Esophagus muscularis mucosa (tissue), 4 donors: ENCODE measurements at regions of chr5 and their contacts with region 1.

Region 1: DNA sequence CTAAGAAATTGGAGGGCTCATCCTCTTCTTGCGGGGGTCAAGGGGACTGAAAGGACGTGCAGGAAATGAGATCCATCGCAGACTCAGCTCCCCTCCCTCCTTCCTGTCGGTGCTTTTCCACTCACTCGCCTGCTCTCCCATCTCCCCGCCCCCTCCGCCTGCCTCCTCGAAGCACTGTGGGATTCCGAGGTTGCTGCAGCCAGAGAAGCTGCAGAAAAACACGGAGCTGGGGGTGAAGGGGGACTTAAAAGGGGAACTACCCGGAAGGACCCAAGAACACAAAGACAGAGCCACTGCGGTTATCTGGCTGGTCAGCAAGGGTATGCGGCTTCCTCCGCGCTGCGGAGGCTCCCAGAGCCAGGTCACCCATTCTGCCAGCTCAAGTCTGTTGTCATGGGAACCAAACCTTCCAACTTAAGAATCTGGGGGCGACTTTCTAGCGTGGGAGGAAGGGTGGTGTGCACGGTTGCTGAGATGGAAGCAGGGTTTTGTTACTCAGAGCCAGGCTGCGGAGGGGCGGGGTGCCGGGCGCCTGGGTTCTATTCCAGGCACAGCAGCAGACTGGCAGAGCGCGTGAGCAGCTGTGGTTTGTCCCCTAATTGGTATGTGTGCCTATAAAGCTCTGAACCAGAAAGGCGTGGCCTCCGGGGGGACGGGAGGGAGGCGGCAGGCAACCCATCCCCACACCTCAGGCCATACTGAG is 24.9 kb downstream of the PCDHGC5 start:
- DNase-seq: no peak
- H3K4me3 ChIP-seq: peak overlapping the region; percentile 65 to 71 (median 66)
- H3K27ac ChIP-seq: peak overlapping the region; percentile 91 to 97 (median 94)
- H3K4me1 ChIP-seq: peaks cover 55 to 73% (median 61%) of the 10 kb centered on the region in 4 donors
- H3K27me3 ChIP-seq: no peaks in the 10 kb centered on the region
- CTCF ChIP-seq: no peak
- EP300 ChIP-seq: no peak
- POLR2A ChIP-seq: no peak

Region 2: DNA sequence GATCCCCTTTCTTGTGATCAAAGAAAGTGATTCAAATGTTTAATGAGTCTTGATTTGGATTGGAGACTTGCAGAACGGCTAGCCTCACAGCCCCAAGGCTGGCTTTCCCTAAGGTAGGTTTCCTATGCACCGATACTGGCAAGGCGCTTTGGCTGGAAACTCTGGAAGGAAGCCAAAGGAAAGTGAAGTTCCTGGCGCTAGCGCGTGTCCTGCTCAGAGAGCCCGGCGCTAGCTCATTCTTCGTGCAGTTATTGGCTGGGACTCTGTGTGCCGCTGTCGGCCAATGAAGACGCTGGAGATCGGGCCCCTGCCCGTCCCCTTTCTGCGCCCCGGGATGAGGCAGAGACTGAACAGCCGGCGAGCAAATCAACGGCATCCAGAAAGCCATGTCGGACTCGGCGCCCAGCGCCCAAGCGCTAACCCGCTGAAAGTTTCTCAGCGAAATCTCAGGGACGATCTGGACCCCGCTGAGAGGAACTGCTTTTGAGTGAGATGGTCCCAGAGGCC is 38.1 kb before region 1 on chr5 and contains the start of gene PCDHGC3:
- intact Hi-C with region 1: loop called (anchors 2 kb)
- DNase-seq: peak; percentile 97
- H3K4me3 ChIP-seq: peak within 1 kb of the TSS; percentile 64 to 75 (median 68)
- H3K27ac ChIP-seq: peak within 1 kb of the TSS; percentile 84 to 93 (median 89)
- H3K4me1 ChIP-seq: peaks cover 39 to 49% (median 48%) of the 10 kb centered on the region in 4 donors
- H3K27me3 ChIP-seq: no peaks in the 10 kb centered on the region
- CTCF ChIP-seq: peak; percentile 40 to 64 (median 58)
- EP300 ChIP-seq: no peak
- POLR2A ChIP-seq: no peak
- total RNA-seq, gene PCDHGC3: 56.5 to 81.1 (median 65.5) TPM

Region 3: GRCh38 chr5:142053426-142054151 is 539.8 kb after region 1 on chr5:
- intact Hi-C with region 1: no loop called
- DNase-seq: no peak
- H3K4me3 ChIP-seq: no peak overlapping the region
- H3K27ac ChIP-seq: peak overlapping the region in 1 of 4 donors; percentile 32
- H3K4me1 ChIP-seq: peaks cover 0 to 7% (median 4%) of the 10 kb centered on the region in 4 donors
- H3K27me3 ChIP-seq: no peaks in the 10 kb centered on the region
- CTCF ChIP-seq: no peak
- EP300 ChIP-seq: no peak
- POLR2A ChIP-seq: no peak